AG04449 (cell line): ENCODE measurements at regions of chr9 and their contacts with region 1.

Region 1: GRCh38 chr9:129737479-129738274 is 15.2 kb downstream of the PTGES start:
- DNase-seq: no peak
- H3K4me3 ChIP-seq: peak overlapping the region; percentile 51
- CTCF ChIP-seq: peak; percentile 95

Region 2: GRCh38 chr9:129696938-129697650 is 40.6 kb before region 1 on chr9:
- CTCF ChIA-PET with region 1: interaction called, 19 read pairs
- POLR2A ChIA-PET with region 1: no interaction called
- DNase-seq: no peak
- H3K4me3 ChIP-seq: peak overlapping the region; percentile 49
- CTCF ChIP-seq: no peak

Region 3: GRCh38 chr9:129712634-129713401 is 24.9 kb before region 1 on chr9:
- CTCF ChIA-PET with region 1: interaction called, 23 read pairs
- POLR2A ChIA-PET with region 1: interaction called, 3 read pairs
- DNase-seq: peak; percentile 76
- H3K4me3 ChIP-seq: peak overlapping the region; percentile 2; the same call in 1 of the 2 replicates
- CTCF ChIP-seq: peak; percentile 1

Region 4: GRCh38 chr9:129726322-129727160 is 11.1 kb before region 1 on chr9:
- CTCF ChIA-PET with region 1: interaction called, 169 read pairs
- POLR2A ChIA-PET with region 1: interaction called, 4 read pairs
- DNase-seq: peak; percentile 12
- H3K4me3 ChIP-seq: no peak overlapping the region
- CTCF ChIP-seq: peak; percentile 90

Region 5: GRCh38 chr9:129761901-129762364 is 24.3 kb after region 1 on chr9:
- CTCF ChIA-PET with region 1: interaction called, 24 read pairs
- POLR2A ChIA-PET with region 1: no interaction called
- DNase-seq: no peak
- H3K4me3 ChIP-seq: no peak overlapping the region
- CTCF ChIP-seq: no peak

Region 6: GRCh38 chr9:129776938-129777768 is 39.5 kb after region 1 on chr9:
- CTCF ChIA-PET with region 1: interaction called, 429 read pairs
- POLR2A ChIA-PET with region 1: interaction called, 4 read pairs
- DNase-seq: peak; percentile 98
- H3K4me3 ChIP-seq: peak overlapping the region; percentile 36
- CTCF ChIP-seq: no peak